IMR-90 (cell line): ENCODE measurements at regions of chr2 and their contacts with region 1.

Region 1: GRCh38 chr2:33441235-33441810 is 35.1 kb upstream of the RASGRP3 start:
- DNase-seq: peak; percentile 78
- ATAC-seq: peak; percentile 80
- H3K4me3 ChIP-seq: no peak overlapping the region
- H3K27ac ChIP-seq: no peak overlapping the region
- H3K4me1 ChIP-seq: peaks cover 6% of the 10 kb centered on the region; the same call in 1 of the 2 replicates
- H3K27me3 ChIP-seq: no peaks in the 10 kb centered on the region
- CTCF ChIP-seq: peak; percentile 90
- POLR2A ChIP-seq: no peak
- RAD21 ChIP-seq: peak; percentile 95

Region 2: DNA sequence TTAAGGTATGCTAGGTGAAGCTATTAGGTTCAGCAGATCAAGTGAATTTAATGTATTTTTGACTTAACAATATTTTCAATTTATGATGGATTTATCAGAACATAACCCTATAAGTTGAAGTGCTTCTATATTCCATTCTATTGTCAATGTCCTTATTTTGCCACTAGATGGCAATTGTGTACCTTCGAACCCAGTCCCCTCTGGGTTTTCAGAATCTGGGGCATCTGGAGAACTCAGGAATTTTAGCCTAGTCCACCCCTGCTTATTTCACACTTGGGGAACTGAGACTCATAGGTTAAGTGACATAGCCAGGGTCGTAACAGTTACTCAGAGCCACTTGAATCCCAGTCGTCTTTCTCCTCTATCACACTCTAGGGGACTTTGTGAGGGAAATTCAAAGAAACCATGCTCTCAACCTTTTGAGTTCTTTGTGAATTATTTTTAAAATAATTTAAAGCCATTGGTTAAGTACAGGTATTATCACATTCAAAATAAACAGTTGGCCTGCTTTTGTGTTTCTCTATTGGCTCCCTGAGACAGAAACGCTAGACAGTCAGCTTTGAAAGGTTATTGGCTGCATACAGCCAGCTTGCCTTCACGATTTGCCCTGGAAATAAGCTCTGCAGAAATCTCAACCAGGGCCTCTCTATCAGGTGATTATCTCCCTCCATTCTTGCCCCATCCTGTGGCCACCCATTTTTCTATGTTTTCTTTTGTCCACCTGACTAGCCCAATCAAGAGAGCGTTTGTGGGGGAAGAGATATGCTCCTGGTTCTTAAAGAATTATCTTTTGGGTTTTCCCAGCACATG is 668.5 kb before region 1 on chr2:
- CTCF ChIA-PET with region 1: interaction called, 3 read pairs
- POLR2A ChIA-PET with region 1: no interaction called
- dilution Hi-C with region 1: no loop called
- in situ Hi-C with region 1: no loop called
- intact Hi-C with region 1: loop called (anchors 2 kb)
- DNase-seq: peak; percentile 76
- ATAC-seq: peak; percentile 95
- H3K4me3 ChIP-seq: no peak overlapping the region
- H3K27ac ChIP-seq: no peak overlapping the region
- H3K4me1 ChIP-seq: peaks cover 7% of the 10 kb centered on the region; the same call in 1 of the 2 replicates
- H3K27me3 ChIP-seq: no peaks in the 10 kb centered on the region
- CTCF ChIP-seq: peak; percentile 85
- POLR2A ChIP-seq: no peak
- RAD21 ChIP-seq: peak; percentile 95

Region 3: GRCh38 chr2:32946314-32947075 is 494.8 kb before region 1 on chr2 and contains the start of gene LTBP1:
- CTCF ChIA-PET with region 1: no interaction called
- POLR2A ChIA-PET with region 1: no interaction called
- dilution Hi-C with region 1: no loop called
- in situ Hi-C with region 1: no loop called
- intact Hi-C with region 1: loop called (anchors 5 kb)
- DNase-seq: peak; percentile 76
- ATAC-seq: peak; percentile 77
- H3K4me3 ChIP-seq: peak within 1 kb of the TSS; percentile 61
- H3K27ac ChIP-seq: peak within 1 kb of the TSS; percentile 83
- H3K4me1 ChIP-seq: peaks cover 7% of the 10 kb centered on the region; the same call in 1 of the 2 replicates
- H3K27me3 ChIP-seq: no peaks in the 10 kb centered on the region
- CTCF ChIP-seq: peak; percentile 82
- POLR2A ChIP-seq: peak; percentile 81
- RAD21 ChIP-seq: peak; percentile 79
- total RNA-seq, gene LTBP1: 297 and 326 TPM in 2 replicates

Region 4: DNA sequence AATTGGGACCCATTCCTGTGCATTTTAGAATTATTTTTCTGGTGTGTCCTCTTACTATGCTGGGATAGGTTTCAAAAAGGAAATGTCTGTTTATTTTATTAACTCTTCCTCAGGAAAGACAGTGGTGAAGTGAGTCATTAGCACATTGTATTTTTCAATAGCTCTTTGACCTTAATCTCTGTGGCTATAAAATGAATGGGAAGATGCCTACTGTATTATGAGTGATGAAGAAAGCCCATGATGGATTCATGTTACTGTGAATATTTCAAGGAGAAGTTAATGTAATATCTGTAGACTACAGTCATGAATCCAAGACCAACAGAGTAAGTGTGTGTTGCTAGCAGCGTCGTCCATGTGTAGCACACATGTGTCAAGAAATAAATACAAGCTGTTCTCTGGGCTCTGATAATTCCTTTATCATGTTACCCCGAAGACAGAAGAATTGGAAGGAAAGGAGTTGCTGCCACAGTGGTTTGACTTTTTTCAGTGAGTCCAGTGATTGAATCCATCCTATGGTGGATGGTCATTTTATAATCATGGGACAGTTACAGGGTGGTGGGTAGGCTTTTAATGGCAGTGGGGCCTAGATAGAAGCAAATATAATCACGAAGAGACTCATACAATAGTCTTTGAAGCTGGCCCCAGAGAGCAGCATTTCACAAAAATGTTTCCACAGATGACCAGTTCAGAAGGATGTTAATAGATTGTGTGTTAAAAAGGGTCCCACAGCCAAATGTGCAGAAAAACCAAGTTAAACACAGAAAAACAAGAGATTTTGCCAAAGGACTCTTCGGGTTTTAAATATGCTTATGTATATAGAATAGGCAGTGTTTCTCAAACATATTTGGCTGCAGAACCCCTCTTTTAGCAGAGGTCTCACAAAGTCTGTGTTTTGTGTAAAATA is 204.6 kb before region 1 on chr2:
- CTCF ChIA-PET with region 1: no interaction called
- POLR2A ChIA-PET with region 1: no interaction called
- dilution Hi-C with region 1: no loop called
- in situ Hi-C with region 1: no loop called
- intact Hi-C with region 1: no loop called
- DNase-seq: peak; percentile 84
- ATAC-seq: peak; percentile 49
- H3K4me3 ChIP-seq: no peak overlapping the region
- H3K27ac ChIP-seq: peak overlapping the region; percentile 33; the same call in 1 of the 2 replicates
- H3K4me1 ChIP-seq: peaks cover 8% of the 10 kb centered on the region; the same call in 1 of the 2 replicates
- H3K27me3 ChIP-seq: no peaks in the 10 kb centered on the region
- CTCF ChIP-seq: no peak
- POLR2A ChIP-seq: no peak
- RAD21 ChIP-seq: no peak

Region 5: DNA sequence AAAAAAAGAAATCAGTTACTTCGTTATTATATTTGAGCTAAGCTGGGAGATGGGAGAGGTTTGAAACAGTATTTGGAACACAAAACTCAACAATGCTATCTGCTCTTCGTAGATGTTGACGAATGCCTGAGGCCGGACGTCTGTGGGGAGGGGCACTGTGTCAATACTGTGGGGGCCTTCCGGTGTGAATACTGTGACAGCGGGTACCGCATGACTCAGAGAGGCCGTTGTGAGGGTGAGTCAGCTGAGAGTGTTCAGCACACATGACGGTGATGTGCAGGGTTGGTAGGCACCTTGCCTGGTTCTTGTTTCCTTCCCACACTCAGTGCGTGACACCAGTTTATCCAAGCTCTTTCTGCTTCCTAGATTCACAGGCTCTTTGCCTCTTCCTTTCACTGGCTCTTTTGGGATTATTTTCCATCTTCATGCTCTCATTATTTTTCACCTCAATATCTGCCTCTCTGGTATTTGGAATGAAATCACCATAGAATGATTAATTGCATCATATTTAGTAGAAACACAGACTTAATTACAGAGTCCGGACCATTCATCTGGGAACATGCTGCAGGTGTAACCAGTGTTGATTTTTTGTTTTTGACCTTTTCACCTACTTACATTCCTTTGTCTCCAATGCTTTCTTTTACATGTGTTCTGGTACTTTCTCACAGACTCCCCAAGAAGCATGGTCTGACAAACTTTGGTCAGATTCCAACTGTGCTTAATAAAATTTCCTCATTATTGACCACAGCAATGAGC is 165.5 kb before region 1 on chr2:
- CTCF ChIA-PET with region 1: no interaction called
- POLR2A ChIA-PET with region 1: no interaction called
- dilution Hi-C with region 1: no loop called
- in situ Hi-C with region 1: no loop called
- intact Hi-C with region 1: loop called (anchors 2 kb)
- DNase-seq: peak; percentile 96
- ATAC-seq: peak; percentile 79
- H3K4me3 ChIP-seq: no peak overlapping the region
- H3K27ac ChIP-seq: 0 out of 2 replicates have a peak overlapping the region, but pooled peaks have one; percentile 0
- H3K4me1 ChIP-seq: peaks cover 3% of the 10 kb centered on the region; the same call in 1 of the 2 replicates
- H3K27me3 ChIP-seq: no peaks in the 10 kb centered on the region
- CTCF ChIP-seq: no peak
- POLR2A ChIP-seq: no peak
- RAD21 ChIP-seq: no peak

Region 6: DNA sequence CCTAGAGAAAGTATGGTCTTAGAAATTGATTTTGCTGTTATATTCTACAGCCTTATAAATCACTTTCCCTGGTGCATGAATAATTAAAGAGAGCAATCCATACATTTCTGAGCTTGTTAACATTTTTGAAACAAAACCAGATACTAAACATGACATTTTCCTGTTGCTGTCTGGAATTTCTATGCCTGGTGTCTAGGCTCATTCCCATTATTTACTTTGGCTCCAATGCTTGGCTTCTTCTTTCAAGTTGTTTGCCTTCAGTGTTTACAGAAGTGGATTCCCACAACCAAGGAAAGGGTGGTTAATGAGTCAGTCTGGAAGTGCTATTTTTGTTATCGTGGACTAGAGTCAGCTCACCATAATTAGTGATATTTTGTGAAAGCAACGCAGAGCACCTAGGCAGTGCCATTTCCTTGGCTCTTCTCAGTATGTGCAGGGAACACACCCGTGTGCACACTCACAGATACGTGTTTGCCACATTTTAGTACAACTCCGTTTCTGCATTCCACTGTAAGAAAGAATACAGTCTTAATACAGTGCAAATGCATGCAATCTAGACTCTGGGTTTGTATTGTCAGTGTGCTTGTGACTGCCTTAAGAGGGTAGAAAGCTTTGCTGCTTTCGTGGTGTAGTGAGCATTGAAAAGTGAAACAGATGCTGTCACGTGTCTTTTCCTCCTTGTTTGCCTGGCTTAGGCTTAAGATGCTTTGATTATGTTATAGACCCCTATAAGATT is 149.9 kb before region 1 on chr2:
- CTCF ChIA-PET with region 1: no interaction called
- POLR2A ChIA-PET with region 1: no interaction called
- dilution Hi-C with region 1: no loop called
- in situ Hi-C with region 1: no loop called
- intact Hi-C with region 1: loop called (anchors 5 kb)
- DNase-seq: peak; percentile 86
- ATAC-seq: peak; percentile 77
- H3K4me3 ChIP-seq: no peak overlapping the region
- H3K27ac ChIP-seq: peak overlapping the region; percentile 16; the same call in 1 of the 2 replicates
- H3K4me1 ChIP-seq: peaks cover 15% of the 10 kb centered on the region
- H3K27me3 ChIP-seq: no peaks in the 10 kb centered on the region
- CTCF ChIP-seq: no peak
- POLR2A ChIP-seq: no peak
- RAD21 ChIP-seq: no peak

Region 7: GRCh38 chr2:33395655-33396249 is 45.6 kb before region 1 on chr2:
- CTCF ChIA-PET with region 1: interaction called, 3 read pairs
- POLR2A ChIA-PET with region 1: interaction called, 4 read pairs
- dilution Hi-C with region 1: no loop called
- in situ Hi-C with region 1: no loop called
- intact Hi-C with region 1: loop called (anchors 5 kb)
- DNase-seq: peak; percentile 59
- ATAC-seq: peak; percentile 62
- H3K4me3 ChIP-seq: no peak overlapping the region
- H3K27ac ChIP-seq: no peak overlapping the region
- H3K4me1 ChIP-seq: peaks cover 6% of the 10 kb centered on the region; the same call in 1 of the 2 replicates
- H3K27me3 ChIP-seq: no peaks in the 10 kb centered on the region
- CTCF ChIP-seq: peak; percentile 67
- POLR2A ChIP-seq: no peak
- RAD21 ChIP-seq: peak; percentile 60

Region 8: DNA sequence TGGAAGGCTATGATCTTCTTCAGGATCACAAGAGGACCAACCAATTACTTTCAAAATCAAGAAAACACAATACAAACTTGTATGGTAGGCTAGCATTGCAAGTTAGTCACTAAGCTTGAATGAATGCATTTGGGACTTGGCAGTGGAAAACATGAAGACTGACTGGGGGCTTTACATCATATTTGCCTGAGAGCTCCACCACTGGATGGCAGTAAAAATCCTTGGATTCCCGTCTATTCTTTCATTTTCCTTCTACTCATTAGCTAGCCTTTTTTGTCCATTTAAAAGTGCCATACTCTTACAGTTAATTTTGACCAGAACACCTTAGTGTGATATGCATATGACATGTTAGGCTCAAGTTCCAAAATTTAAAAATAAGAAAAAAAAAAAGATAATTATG is 28.4 kb before region 1 on chr2:
- CTCF ChIA-PET with region 1: interaction called, 16 read pairs
- POLR2A ChIA-PET with region 1: no interaction called
- dilution Hi-C with region 1: no loop called
- in situ Hi-C with region 1: no loop called
- intact Hi-C with region 1: loop called (anchors 1 kb)
- DNase-seq: peak; percentile 76
- ATAC-seq: peak; percentile 44; the same call in 1 of the 2 replicates
- H3K4me3 ChIP-seq: no peak overlapping the region
- H3K27ac ChIP-seq: peak overlapping the region; percentile 78; the same call in 1 of the 2 replicates
- H3K4me1 ChIP-seq: peaks cover 5% of the 10 kb centered on the region
- H3K27me3 ChIP-seq: no peaks in the 10 kb centered on the region
- CTCF ChIP-seq: peak; percentile 58
- POLR2A ChIP-seq: no peak
- RAD21 ChIP-seq: peak; percentile 61